Activated CD4-positive, alpha-beta T cell treated with anti-CD3 and anti-CD28 coated beads for 36 hours (primary cell): ENCODE measurements at regions of chr5 and their contacts with region 1.

Region 1: GRCh38 chr5:128201065-128201926 is 117.7 kb downstream of the SLC12A2 start:
- DNase-seq: peak; percentile 91
- ATAC-seq: peak; percentile 87
- H3K4me3 Mint-ChIP-seq: no peak overlapping the region
- H3K27ac Mint-ChIP-seq: no peak overlapping the region
- H3K4me1 Mint-ChIP-seq: peaks cover 37% of the 10 kb centered on the region
- H3K27me3 Mint-ChIP-seq: no peaks in the 10 kb centered on the region

Region 2: DNA sequence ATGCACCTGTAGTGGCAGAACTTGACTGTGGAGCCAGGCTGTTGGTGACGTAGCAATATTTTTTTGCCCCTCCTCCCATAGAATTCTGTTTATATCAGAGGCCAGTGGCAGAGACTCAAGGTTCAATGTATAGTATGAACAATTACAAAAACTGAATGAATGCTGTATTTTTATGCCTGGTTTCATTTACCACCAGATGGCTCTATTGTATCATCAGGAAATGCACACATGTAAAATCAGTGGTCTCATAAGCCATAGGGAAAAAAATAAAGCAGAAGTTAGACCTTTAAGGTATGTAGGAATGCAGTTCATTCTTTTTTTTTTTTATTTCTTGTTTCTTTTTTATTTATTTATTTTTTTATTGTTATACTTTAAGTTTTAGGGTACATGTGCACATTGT is 454.5 kb before region 1 on chr5:
- CTCF ChIA-PET with region 1: no interaction called
- POLR2A ChIA-PET with region 1: no interaction called
- intact Hi-C with region 1: loop called (anchors 1 to 2 kb)
- DNase-seq: no peak
- ATAC-seq: no peak
- H3K4me3 Mint-ChIP-seq: no peak overlapping the region
- H3K27ac Mint-ChIP-seq: no peak overlapping the region
- H3K4me1 Mint-ChIP-seq: no peaks in the 10 kb centered on the region
- H3K27me3 Mint-ChIP-seq: peaks cover 9% of the 10 kb centered on the region

Region 3: GRCh38 chr5:127757576-127757975 is 443.7 kb before region 1 on chr5:
- CTCF ChIA-PET with region 1: interaction called, 4 read pairs
- POLR2A ChIA-PET with region 1: no interaction called
- intact Hi-C with region 1: loop called in 1 of 2 experiments (anchors 1 kb)
- DNase-seq: peak; percentile 45
- ATAC-seq: peak; percentile 80
- H3K4me3 Mint-ChIP-seq: no peak overlapping the region
- H3K27ac Mint-ChIP-seq: no peak overlapping the region
- H3K4me1 Mint-ChIP-seq: no peaks in the 10 kb centered on the region
- H3K27me3 Mint-ChIP-seq: no peaks in the 10 kb centered on the region

Region 4: GRCh38 chr5:127875235-127876021 is 325.9 kb before region 1 on chr5:
- CTCF ChIA-PET with region 1: interaction called, 6 read pairs
- POLR2A ChIA-PET with region 1: no interaction called
- intact Hi-C with region 1: loop called (anchors 1 to 2 kb)
- DNase-seq: peak; percentile 60
- ATAC-seq: peak; percentile 91
- H3K4me3 Mint-ChIP-seq: no peak overlapping the region
- H3K27ac Mint-ChIP-seq: no peak overlapping the region
- H3K4me1 Mint-ChIP-seq: no peaks in the 10 kb centered on the region
- H3K27me3 Mint-ChIP-seq: no peaks in the 10 kb centered on the region

Region 5: GRCh38 chr5:128366148-128366547 is 164.9 kb after region 1 on chr5:
- CTCF ChIA-PET with region 1: no interaction called
- POLR2A ChIA-PET with region 1: no interaction called
- intact Hi-C with region 1: no loop called
- DNase-seq: no peak
- ATAC-seq: no peak
- H3K4me3 Mint-ChIP-seq: no peak overlapping the region
- H3K27ac Mint-ChIP-seq: no peak overlapping the region
- H3K4me1 Mint-ChIP-seq: no peaks in the 10 kb centered on the region
- H3K27me3 Mint-ChIP-seq: peaks cover 2% of the 10 kb centered on the region